HEK293 (cell line): ENCODE measurements at regions of chr10 and their contacts with region 1.

Region 1: GRCh38 chr10:106625751-106626150 is 538.8 kb downstream of the SORCS1 start:
- H3K4me3 ChIP-seq: no peak overlapping the region
- H3K27ac ChIP-seq: no peak overlapping the region
- H3K4me1 ChIP-seq: no peaks in the 10 kb centered on the region
- CTCF ChIP-seq: no peak

Region 2: DNA sequence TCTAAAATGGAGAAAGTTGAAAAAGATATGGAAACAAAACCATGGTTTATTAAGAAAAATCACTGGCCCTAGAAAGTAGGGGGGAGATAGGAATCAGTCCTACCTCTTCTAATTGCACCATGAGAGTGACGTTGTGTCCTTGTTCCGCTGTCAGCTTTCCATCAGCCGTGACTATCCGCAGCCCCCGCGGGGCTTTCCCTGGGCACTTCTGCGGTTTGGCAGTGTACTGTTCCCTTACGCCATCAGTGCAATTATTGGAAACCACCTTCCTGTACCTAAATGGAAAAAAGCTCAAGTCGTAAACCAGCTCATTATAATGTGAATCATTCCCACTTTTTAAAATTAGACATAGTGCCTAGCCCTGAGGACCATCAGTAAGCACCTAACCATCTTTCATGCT is 26.5 kb after region 1 on chr10:
- CTCF ChIA-PET with region 1: interaction called, 16 read pairs
- POLR2A ChIA-PET with region 1: interaction called, 3 read pairs
- H3K4me3 ChIP-seq: no peak overlapping the region
- H3K27ac ChIP-seq: no peak overlapping the region
- H3K4me1 ChIP-seq: peaks cover 22% of the 10 kb centered on the region
- CTCF ChIP-seq: no peak

Region 3: DNA sequence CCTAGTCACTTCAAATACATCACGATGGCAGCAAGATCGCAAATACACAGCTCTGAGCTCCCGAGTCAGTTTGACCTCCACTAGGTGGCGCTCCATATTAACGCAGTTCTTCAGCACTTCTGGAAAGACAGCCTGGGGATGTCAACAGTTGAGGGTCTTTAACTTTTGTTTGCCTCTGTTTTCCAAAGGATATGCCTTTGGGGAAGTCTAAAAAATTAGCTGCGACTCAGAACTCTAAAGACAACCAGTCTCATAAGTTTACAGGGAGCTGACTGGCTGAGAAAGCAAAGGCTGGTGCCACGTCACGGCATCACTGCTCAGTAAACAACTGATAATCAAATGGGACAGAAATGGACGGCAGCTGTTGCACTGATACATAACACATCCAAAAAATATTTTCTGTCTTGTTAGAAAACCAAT is 79.9 kb after region 1 on chr10:
- CTCF ChIA-PET with region 1: interaction called, 10 read pairs
- POLR2A ChIA-PET with region 1: no interaction called
- H3K4me3 ChIP-seq: no peak overlapping the region
- H3K27ac ChIP-seq: no peak overlapping the region
- H3K4me1 ChIP-seq: no peaks in the 10 kb centered on the region
- CTCF ChIP-seq: no peak